ENCODE measurements at regions of chr11 and their contacts with region 1.

Region 1: DNA sequence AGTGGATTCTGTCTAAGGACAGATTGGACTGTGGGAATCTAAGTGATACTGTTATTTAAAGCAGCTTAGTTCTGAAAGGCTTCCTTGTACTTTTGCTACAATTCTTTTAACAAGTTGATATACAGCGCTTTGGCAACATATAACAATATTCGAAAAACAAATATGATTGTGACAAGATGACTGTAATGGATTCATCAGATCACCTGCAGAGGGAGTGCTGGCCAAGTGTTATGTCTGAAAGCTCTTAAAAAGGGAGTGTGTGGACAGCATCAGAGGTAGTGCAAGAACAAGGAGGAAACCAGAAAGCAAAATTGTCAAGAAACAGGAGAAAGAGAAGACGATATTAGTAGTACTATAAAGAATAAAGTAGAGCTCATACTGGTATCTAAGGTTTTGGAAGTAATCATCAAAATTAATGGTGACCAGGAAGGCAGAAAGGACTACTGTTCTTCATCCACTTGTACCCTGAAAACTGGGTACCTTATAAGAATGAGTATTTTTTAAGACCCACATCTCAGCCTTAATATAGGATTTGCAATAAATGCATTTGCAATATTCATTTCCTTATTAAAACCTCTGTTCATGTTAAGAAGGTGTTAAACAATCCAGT is 1112.0 kb upstream of the CCDC90B start:
- DNase-seq: no peak
- H3K4me3 ChIP-seq: no peak overlapping the region
- H3K27ac ChIP-seq: no peak overlapping the region
- H3K4me1 ChIP-seq: no peaks in the 10 kb centered on the region
- H3K27me3 ChIP-seq: peaks cover 0 to 3% (median 0%) of the 10 kb centered on the region in 4 experiments; a peak in 1 of 7 replicates
- CTCF ChIP-seq: peak in 2 of 3 experiments; percentile 57 to 61; a peak in 3 of 4 replicates
- EP300 ChIP-seq: no peak
- POLR2A ChIP-seq: no peak
- RAD21 ChIP-seq: peak; percentile 76 to 80

Region 2: GRCh38 chr11:84270466-84270865 is 127.7 kb before region 1 on chr11:
- CTCF ChIA-PET with region 1: no interaction called
- POLR2A ChIA-PET with region 1: no interaction called
- DNase-seq: no peak
- H3K4me3 ChIP-seq: no peak overlapping the region
- H3K27ac ChIP-seq: no peak overlapping the region
- H3K4me1 ChIP-seq: no peaks in the 10 kb centered on the region
- H3K27me3 ChIP-seq: no peaks in the 10 kb centered on the region
- CTCF ChIP-seq: no peak
- EP300 ChIP-seq: no peak
- POLR2A ChIP-seq: no peak
- RAD21 ChIP-seq: no peak

Region 3: GRCh38 chr11:84355911-84356310 is 42.2 kb before region 1 on chr11:
- CTCF ChIA-PET with region 1: no interaction called
- POLR2A ChIA-PET with region 1: no interaction called
- DNase-seq: no peak
- H3K4me3 ChIP-seq: no peak overlapping the region
- H3K27ac ChIP-seq: no peak overlapping the region
- H3K4me1 ChIP-seq: no peaks in the 10 kb centered on the region
- H3K27me3 ChIP-seq: no peaks in the 10 kb centered on the region; a peak in 1 of 7 replicates
- CTCF ChIP-seq: no peak
- EP300 ChIP-seq: no peak
- POLR2A ChIP-seq: no peak
- RAD21 ChIP-seq: no peak

Region 4: GRCh38 chr11:84384731-84385130 is 13.4 kb before region 1 on chr11:
- CTCF ChIA-PET with region 1: interaction called, 30 read pairs
- POLR2A ChIA-PET with region 1: no interaction called
- DNase-seq: peak in 1 of 2 experiments; percentile 66
- H3K4me3 ChIP-seq: no peak overlapping the region
- H3K27ac ChIP-seq: no peak overlapping the region
- H3K4me1 ChIP-seq: no peaks in the 10 kb centered on the region
- H3K27me3 ChIP-seq: no peaks in the 10 kb centered on the region
- CTCF ChIP-seq: peak in 2 of 3 experiments; percentile 73 to 80; a peak in 3 of 4 replicates
- EP300 ChIP-seq: no peak
- POLR2A ChIP-seq: no peak
- RAD21 ChIP-seq: peak; percentile 69 to 77

Region 5: GRCh38 chr11:84501750-84502149 is 103.6 kb after region 1 on chr11:
- CTCF ChIA-PET with region 1: interaction called, 11 read pairs
- POLR2A ChIA-PET with region 1: no interaction called
- DNase-seq: no peak
- H3K4me3 ChIP-seq: no peak overlapping the region
- H3K27ac ChIP-seq: no peak overlapping the region
- H3K4me1 ChIP-seq: no peaks in the 10 kb centered on the region
- H3K27me3 ChIP-seq: no peaks in the 10 kb centered on the region
- CTCF ChIP-seq: no peak
- EP300 ChIP-seq: no peak
- POLR2A ChIP-seq: no peak
- RAD21 ChIP-seq: no peak

Region 6: DNA sequence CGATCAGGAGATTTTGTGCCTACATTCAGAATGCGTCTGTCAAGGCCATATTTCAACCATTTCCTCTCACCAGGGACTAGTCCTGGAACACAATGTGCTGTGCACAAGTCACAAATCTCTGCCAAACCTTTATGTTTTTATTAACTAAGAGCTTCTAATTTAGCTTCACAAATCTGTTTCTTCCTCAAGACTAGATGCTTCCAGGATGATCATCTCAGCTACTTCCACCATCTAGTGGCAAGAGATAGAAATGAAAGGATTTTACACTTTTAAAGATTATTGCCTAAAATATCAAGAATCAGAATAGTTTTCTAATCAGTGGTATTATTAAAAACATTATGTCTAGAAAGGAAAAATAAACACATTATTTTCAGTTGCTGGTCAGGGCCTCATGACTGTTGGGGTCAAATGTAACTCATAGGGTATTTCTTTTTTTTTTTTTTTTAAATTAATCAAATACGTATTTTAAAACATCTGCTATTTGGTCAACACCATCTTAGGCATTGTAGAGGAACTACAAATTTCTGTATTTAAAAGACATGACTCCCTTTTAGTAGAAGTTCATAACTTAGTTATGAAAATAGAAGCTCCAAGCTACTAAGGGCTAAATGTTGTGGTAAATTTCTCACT is 126.4 kb after region 1 on chr11:
- CTCF ChIA-PET with region 1: interaction called, 112 read pairs
- POLR2A ChIA-PET with region 1: no interaction called
- DNase-seq: no peak
- H3K4me3 ChIP-seq: no peak overlapping the region
- H3K27ac ChIP-seq: no peak overlapping the region
- H3K4me1 ChIP-seq: peaks cover 0 to 2% (median 0%) of the 10 kb centered on the region in 4 experiments; a peak in 2 of 7 replicates
- H3K27me3 ChIP-seq: no peaks in the 10 kb centered on the region
- CTCF ChIP-seq: peak in 2 of 3 experiments; percentile 37 to 42; a peak in 2 of 4 replicates
- EP300 ChIP-seq: no peak
- POLR2A ChIP-seq: no peak
- RAD21 ChIP-seq: peak; percentile 64 to 71

Region 7: DNA sequence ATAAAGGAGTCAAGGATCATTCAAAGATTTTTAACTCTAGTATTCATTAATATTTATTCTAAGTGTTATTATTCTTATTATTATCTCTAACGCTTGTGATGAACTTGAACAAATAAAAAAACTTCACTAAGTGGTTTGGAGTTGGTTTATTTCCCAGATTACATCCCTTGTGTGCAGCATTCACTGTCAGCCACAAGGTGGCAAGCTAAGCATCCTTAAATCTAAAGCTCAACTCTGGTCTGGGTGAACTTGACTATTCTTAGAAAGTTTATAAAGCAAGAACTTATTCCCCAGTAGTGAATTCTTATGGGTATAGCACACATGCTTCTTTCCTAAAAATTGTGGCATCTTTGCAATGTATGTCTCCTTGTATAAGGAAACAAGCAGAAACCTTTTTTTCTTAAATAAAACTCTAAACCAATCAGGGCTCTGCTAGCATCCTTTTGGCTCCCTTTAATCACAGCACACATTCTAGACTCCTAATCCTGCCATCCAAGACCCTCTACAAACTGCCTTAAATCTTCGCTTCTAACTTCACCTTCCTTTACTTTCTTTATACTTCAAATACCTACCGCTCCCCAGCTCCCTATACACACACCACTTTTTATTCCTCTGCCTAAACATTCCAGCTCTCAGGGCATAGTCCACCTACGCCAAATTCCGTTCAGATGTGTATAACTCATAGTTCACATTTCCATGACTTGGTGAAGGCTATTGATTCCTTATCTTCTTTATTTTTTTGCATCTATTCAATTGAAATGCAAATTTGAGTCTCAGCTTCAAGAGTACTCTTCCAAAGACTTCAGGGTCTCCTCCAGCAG is 160.2 kb after region 1 on chr11:
- CTCF ChIA-PET with region 1: interaction called, 21 read pairs
- POLR2A ChIA-PET with region 1: no interaction called
- DNase-seq: no peak
- H3K4me3 ChIP-seq: no peak overlapping the region
- H3K27ac ChIP-seq: no peak overlapping the region
- H3K4me1 ChIP-seq: no peaks in the 10 kb centered on the region
- H3K27me3 ChIP-seq: no peaks in the 10 kb centered on the region
- CTCF ChIP-seq: peak in 2 of 3 experiments; percentile 76; a peak in 3 of 4 replicates
- EP300 ChIP-seq: no peak
- POLR2A ChIP-seq: no peak
- RAD21 ChIP-seq: peak; percentile 91 to 92